ENCODE measurements at regions of chr2 and their contacts with region 1.

Region 1: GRCh38 chr2:153163058-153163457 is 315.5 kb downstream of the RPRM start:
- DNase-seq: peak; percentile 14
- H3K4me3 ChIP-seq: no peak overlapping the region
- H3K27ac ChIP-seq: no peak overlapping the region
- H3K4me1 ChIP-seq: no peaks in the 10 kb centered on the region
- H3K27me3 ChIP-seq: no peaks in the 10 kb centered on the region
- CTCF ChIP-seq: peak; percentile 53 to 70

Region 2: DNA sequence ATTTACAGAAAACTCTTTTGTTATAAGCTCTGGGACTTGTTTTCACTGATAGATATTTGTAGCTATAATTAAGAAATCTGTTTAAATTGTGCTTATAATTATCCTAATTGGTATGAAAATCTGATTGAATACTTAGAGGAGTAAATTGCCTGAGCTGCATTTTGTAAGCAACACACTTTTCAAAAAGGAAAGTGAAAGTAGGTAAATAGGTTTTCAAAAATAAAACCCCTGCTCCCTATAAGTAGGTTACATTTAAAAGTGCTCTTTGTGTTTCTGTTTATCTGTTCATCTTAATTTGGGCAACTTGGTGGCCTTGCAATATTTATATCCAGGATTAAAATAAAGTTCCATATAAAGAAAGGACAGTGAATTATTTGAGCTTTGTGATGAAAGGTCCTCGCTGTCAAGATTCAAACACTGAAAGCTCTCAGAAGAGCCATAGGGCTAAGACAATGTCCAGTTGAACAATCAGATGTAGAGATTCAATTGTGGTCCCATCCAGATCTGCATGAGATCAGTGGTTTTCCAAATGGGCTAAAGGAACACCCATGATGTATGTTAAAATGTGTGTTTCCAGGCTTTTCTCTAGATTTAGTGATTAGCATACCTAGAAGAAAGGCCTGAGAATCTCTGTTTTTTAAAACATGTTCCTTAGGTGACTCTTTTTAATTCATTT is 56.1 kb before region 1 on chr2:
- CTCF ChIA-PET with region 1: no interaction called
- dilution Hi-C with region 1: no loop called
- in situ Hi-C with region 1: no loop called
- intact Hi-C with region 1: no loop called
- DNase-seq: no peak
- H3K4me3 ChIP-seq: no peak overlapping the region
- H3K27ac ChIP-seq: no peak overlapping the region
- H3K4me1 ChIP-seq: no peaks in the 10 kb centered on the region
- H3K27me3 ChIP-seq: no peaks in the 10 kb centered on the region
- CTCF ChIP-seq: no peak

Region 3: GRCh38 chr2:153497938-153498629 is 335.0 kb after region 1 on chr2:
- CTCF ChIA-PET with region 1: no interaction called
- dilution Hi-C with region 1: no loop called
- in situ Hi-C with region 1: loop called in 1 of 2 experiments (anchors 25 kb)
- intact Hi-C with region 1: loop called (anchors 1 kb)
- DNase-seq: no peak
- H3K4me3 ChIP-seq: no peak overlapping the region
- H3K27ac ChIP-seq: no peak overlapping the region
- H3K4me1 ChIP-seq: no peaks in the 10 kb centered on the region
- H3K27me3 ChIP-seq: no peaks in the 10 kb centered on the region
- CTCF ChIP-seq: no peak

Measured in mammary epithelial cell (primary cell).